Caco-2 (cell line): ENCODE measurements at regions of chr3 and their contacts with region 1.

Region 1: GRCh38 chr3:45037734-45038455 is 11.8 kb downstream of the CLEC3B start:
- DNase-seq: peak; percentile 91
- H3K4me3 ChIP-seq: no peak overlapping the region
- H3K4me3 Mint-ChIP-seq: peak overlapping the region; percentile 58
- H3K27ac Mint-ChIP-seq: no peak overlapping the region
- H3K4me1 ChIP-seq: no peaks in the 10 kb centered on the region
- H3K4me1 Mint-ChIP-seq: no peaks in the 10 kb centered on the region
- H3K27me3 ChIP-seq: no peaks in the 10 kb centered on the region
- H3K27me3 Mint-ChIP-seq: peaks cover 6% of the 10 kb centered on the region
- CTCF ChIP-seq: peak; percentile 90 to 95

Region 2: DNA sequence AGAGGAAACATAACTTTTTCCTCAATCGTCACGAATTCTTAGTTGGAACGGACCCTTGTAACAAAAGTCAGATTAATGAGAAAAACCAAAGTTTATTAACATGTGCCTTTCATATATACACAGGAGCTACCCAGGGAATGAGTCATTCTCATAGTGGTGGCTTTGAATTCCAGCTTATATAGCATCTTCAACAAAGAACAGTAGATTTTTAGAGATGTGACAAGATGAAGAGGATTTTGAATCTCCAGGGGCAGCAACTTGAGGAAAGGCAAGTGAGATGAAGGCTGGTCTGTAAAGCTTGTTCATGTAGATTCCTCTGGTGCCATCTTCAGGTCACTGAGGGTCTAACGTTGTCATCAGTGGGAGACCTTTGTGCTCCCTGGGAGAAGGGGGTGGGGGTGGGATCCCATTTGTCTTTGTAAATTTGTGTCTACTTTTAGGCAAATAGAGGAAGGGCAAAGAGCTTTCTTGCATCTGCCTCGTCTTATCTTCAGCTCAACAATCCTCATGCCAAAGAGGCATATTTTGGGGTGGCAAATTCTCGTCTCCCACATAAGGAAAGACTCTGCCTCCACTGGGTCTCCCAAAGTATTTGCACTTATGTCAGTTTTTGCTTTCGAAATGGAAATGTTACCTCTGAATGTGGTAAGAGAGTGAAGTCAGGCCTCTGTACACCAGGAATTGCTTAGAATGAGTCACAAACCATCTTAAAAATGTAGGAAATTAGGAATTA is 17.7 kb after region 1 on chr3:
- CTCF ChIA-PET with region 1: interaction called, 13 read pairs
- POLR2A ChIA-PET with region 1: no interaction called
- intact Hi-C with region 1: loop called (anchors 1 kb)
- DNase-seq: peak; percentile 56 to 59
- H3K4me3 ChIP-seq: no peak overlapping the region
- H3K4me3 Mint-ChIP-seq: no peak overlapping the region
- H3K27ac Mint-ChIP-seq: no peak overlapping the region
- H3K4me1 ChIP-seq: peaks cover 9% of the 10 kb centered on the region; the same call in 1 of the 2 replicates
- H3K4me1 Mint-ChIP-seq: no peaks in the 10 kb centered on the region
- H3K27me3 ChIP-seq: no peaks in the 10 kb centered on the region
- H3K27me3 Mint-ChIP-seq: no peaks in the 10 kb centered on the region
- CTCF ChIP-seq: peak; percentile 40 to 48